Left cardiac atrium (tissue), 4 donors: ENCODE measurements at regions of chr17 and their contacts with region 1.

Region 1: DNA sequence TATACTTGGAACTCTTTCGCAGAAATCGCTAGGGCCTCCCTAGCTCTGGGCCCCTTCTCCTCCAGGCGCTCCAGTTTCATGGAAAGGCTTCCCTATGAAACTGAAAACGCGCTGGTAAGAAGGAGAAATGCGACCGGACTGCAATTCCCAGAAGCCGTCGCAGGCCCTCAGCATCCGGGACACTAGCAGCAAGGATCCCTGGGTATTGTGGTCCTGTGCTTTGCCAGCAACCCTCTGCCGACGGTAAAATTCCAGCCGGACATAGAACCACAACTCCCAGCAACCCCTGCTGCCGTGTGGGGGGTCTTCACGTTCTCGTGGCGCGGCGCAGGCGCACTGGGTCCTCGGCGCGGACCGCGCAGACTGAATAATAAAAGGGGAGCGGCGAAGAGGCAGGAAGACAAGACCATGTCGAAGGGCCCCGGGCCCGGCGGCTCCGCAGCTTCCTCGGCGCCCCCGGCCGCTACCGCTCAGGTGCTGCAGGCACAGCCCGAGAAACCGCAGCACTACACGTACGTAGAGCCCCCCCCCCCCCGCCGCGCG is at the start of gene UNK:
- DNase-seq: peak; percentile 97
- ATAC-seq: peak; percentile 92 to 95
- total RNA-seq, gene UNK: 15.8 to 17.8 TPM

Region 2: DNA sequence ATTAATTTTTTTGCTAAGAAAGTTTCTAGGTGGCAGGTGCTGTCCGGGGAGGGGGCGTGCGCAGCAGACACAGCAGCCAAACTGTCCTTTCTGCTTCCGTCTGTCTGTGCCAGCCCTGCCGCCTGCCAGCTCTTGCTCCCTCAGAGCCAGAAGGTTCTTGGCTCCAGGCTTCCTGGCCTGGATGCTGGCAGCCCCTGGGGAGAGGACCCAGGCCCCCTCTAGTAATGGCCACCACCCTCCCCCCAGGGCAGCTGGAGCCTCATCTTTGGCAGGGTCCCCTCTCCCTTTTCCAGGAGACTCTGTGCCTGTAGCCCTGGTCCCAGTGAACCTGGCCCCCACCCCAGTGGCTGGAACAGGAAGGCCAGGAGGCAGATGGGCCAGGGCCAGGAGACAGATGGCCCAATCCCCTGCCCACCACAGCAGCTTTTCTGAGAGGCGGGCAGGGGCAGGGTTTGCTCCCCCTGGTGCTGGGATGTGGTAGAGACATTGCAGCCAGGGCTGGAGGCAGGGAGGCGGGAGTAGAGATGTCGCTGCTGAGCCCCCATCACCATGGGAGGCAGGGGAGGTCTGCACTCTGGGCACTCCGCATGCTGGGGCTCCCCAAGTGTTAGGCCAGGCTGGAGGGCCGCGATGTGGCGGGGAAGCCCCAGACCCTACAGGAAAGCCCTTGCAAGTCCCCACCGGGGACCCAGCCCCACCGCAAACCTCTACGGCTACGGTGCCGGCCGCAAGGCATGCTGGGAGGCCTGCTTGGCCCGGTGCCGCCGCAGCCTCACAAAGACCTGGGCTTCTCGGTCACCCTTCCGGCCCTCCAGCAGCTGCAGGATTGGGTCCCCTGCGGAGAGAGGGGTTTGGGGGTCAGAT is 42.9 kb after region 1 on chr17:
- intact Hi-C with region 1: loop called in 1 of 2 experiments (anchors 2 kb)
- DNase-seq: peak; percentile 79
- ATAC-seq: peak; percentile 68

Region 3: GRCh38 chr17:75855310-75856081 is 71.0 kb after region 1 on chr17 and contains the start of gene WBP2:
- intact Hi-C with region 1: loop called in 1 of 2 experiments (anchors 2 kb)
- DNase-seq: peak; percentile 99
- ATAC-seq: peak; percentile 93 to 95
- total RNA-seq, gene WBP2: 106 to 122 TPM